Transverse colon (tissue), 4 donors: ENCODE measurements at regions of chr13 and their contacts with region 1.

Region 1: DNA sequence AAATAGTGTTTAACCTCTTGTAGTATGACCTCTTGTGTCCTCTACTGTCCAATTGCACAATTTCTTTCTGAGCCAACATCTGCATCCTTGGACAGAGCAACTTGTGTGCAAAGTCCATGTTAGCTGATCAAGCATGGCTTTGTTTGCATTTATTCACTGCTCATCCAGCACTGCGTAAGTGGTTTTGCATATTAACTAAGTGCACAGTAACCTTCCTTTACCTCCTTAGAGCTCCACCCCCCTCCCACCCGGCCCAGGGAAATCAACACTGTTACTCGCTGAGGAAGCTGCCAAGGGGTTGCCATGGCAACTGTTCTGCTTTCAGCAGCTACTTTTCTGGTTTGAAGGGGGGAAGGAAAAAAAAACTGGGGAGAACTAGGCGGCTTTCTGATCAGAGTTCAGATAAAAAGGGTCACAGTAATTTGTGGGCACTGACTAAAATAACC is 153.5 kb upstream of the KLF12 start:
- DNase-seq: peak; percentile 85
- H3K4me3 ChIP-seq: peak overlapping the region in 2 of 4 donors; percentile 4 to 23
- H3K27ac ChIP-seq: peak overlapping the region; percentile 47 to 70 (median 62)
- H3K4me1 ChIP-seq: peaks cover 0 to 43% (median 22%) of the 10 kb centered on the region in 4 donors
- H3K27me3 ChIP-seq: no peaks in the 10 kb centered on the region
- CTCF ChIP-seq: no peak
- EP300 ChIP-seq: no peak
- POLR2A ChIP-seq: no peak

Region 2: GRCh38 chr13:73754727-73755292 is 532.9 kb before region 1 on chr13:
- in situ Hi-C with region 1: loop called in 1 of 4 experiments (anchors 25 kb)
- intact Hi-C with region 1: no loop called
- DNase-seq: no peak
- H3K4me3 ChIP-seq: no peak overlapping the region
- H3K27ac ChIP-seq: no peak overlapping the region
- H3K4me1 ChIP-seq: peaks cover 0 to 15% (median 3%) of the 10 kb centered on the region in 4 donors
- H3K27me3 ChIP-seq: no peaks in the 10 kb centered on the region
- CTCF ChIP-seq: peak; percentile 65 to 72 (median 69)
- EP300 ChIP-seq: no peak
- POLR2A ChIP-seq: no peak

Region 3: DNA sequence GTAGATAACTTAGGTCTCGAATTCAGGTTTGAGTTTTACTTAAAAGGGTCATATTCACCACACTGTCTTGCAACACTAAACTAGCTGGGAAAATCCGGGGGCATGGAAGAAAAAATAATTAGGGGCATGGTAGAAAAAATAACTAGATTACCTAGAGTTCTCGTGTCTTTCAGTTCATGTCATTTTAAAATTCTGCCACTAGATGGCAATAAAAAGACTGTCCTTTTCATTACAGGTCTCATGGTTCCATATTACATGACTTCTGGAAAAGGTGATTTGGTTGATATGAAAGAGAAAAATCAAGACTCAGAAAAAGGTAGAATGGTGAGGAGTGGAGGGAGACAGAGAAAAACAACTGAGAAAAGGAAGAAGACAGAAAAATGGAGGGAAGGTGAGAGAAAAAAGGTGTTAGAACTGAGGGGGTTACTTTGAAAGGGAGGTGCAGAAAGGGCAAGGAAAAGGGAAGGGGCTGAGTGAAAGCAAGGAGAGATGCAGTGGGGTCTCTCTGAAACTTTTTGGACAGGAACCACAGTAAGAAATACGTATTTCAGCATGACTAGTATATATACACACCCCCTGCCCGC is 452.5 kb before region 1 on chr13:
- in situ Hi-C with region 1: loop called in 3 of 4 experiments (anchors 5 to 25 kb)
- intact Hi-C with region 1: no loop called
- DNase-seq: no peak
- H3K4me3 ChIP-seq: no peak overlapping the region
- H3K27ac ChIP-seq: no peak overlapping the region
- H3K4me1 ChIP-seq: peaks cover 0 to 16% (median 7%) of the 10 kb centered on the region in 4 donors
- H3K27me3 ChIP-seq: no peaks in the 10 kb centered on the region
- CTCF ChIP-seq: peak; percentile 61 to 82 (median 78)
- EP300 ChIP-seq: no peak
- POLR2A ChIP-seq: no peak

Region 4: DNA sequence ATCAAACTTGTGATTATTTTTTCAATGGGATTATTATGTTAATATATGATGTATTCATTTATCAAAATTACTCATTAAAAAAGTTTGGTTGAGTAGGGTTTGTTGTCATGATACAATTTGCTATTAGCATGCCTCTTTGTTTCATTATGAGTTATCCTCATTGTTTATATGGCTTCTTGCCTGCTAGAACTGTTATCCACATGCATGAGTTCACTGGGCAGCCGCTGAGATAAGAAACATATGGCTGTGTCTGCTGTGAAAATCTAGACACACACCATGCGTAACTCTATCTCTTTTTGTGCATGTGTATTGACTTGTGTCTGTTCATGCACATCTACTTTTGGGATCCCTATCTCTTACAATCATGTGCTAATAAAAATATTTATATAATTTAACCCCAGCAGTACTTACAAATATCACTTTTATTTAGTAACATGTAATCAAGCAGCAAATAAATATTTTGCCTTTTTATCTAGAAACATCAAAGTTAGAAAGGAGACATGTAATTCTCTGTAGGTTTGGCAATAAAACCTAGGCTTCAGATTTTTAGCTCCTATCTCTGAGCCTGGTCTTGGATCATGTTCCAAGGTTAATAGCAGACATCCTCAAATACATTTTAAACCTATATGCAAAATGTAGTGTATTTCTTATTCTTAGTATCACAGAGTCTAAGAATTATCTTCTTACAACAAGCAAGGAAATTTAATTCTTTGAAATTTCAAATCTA is 142.3 kb before region 1 on chr13:
- in situ Hi-C with region 1: loop called in 1 of 4 experiments (anchors 10 kb)
- intact Hi-C with region 1: no loop called
- DNase-seq: no peak
- H3K4me3 ChIP-seq: no peak overlapping the region
- H3K27ac ChIP-seq: no peak overlapping the region
- H3K4me1 ChIP-seq: no peaks in the 10 kb centered on the region
- H3K27me3 ChIP-seq: no peaks in the 10 kb centered on the region
- CTCF ChIP-seq: no peak
- EP300 ChIP-seq: no peak
- POLR2A ChIP-seq: no peak

Region 5: GRCh38 chr13:75507027-75508001 is 1219.6 kb after region 1 on chr13:
- in situ Hi-C with region 1: no loop called
- intact Hi-C with region 1: no loop called
- DNase-seq: no peak
- H3K4me3 ChIP-seq: no peak overlapping the region
- H3K27ac ChIP-seq: no peak overlapping the region
- H3K4me1 ChIP-seq: no peaks in the 10 kb centered on the region
- H3K27me3 ChIP-seq: no peaks in the 10 kb centered on the region
- CTCF ChIP-seq: no peak
- EP300 ChIP-seq: no peak
- POLR2A ChIP-seq: no peak